ENCODE measurements at regions of chr5 and their contacts with region 1.

Region 1: DNA sequence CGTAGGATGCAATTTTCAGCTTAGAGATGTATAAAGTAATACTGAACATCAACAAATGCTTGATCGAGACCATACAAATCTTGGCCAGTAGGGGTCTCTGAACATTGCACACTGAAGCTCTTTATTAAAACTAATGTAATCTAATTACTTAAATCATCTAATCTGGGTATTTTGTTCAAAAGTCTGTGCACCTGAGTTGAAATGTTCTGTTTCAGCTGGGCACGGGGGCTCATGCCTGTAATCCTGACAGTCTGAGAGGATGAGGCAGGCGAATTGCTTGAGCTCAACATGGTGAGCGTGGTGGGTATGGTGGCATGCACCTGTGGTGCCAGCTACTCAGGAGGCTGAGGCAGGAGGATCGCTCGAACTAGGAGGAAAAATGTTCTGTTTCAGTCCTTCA is 41.0 kb downstream of the ESM1 start:
- DNase-seq: no peak
- H3K4me3 ChIP-seq: no peak overlapping the region
- H3K27me3 ChIP-seq: no peaks in the 10 kb centered on the region
- CTCF ChIP-seq: peak; percentile 80

Region 2: DNA sequence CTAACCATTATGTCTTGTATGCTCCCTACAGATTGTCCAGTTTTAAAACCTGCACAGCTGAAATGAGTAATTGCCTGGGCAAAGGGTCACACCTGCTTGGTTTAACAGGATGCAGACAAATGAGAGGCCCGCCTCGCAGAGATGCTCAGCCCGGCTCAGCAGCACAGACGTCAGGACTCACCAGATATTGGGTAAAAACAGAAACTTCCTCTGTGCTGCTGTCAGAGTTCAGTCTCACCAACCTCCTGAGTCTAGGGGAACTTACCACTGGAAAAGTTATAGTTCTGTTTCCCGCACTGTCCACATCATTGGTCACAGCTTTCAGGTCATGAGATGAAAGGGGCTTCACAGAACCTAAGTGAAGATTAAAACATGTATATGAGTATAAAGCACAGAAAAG is 111.5 kb before region 1 on chr5:
- CTCF ChIA-PET with region 1: no interaction called
- POLR2A ChIA-PET with region 1: no interaction called
- DNase-seq: no peak
- H3K4me3 ChIP-seq: no peak overlapping the region
- H3K27me3 ChIP-seq: no peaks in the 10 kb centered on the region
- CTCF ChIP-seq: no peak

Region 3: DNA sequence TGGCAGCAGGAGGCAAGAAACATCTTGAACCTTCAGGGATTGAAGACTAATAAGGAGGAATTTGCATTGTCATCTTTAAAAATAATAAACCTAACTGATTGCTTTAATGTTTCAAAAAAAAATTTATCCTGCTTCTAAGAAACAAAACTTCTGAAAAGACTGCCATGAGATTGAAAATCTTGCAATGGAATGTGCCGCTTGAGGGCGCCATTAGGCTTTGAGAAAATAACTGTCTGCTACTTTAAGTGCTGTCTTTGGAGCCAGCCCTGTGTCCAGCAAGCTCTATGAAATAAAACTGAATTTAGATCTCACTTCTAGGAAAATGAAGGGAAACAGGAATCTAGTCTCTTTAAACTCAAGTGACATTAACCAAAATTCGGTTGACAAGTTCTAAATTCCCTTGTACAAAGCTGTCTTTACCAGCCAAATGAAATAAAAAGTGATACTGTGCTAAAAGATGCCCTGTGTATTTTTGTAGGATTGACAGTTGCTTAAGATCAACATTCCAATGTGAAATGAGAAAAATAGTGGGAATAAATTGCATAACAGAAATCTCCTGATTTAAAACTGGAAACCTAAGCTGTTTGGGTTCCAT is 38.3 kb before region 1 on chr5:
- CTCF ChIA-PET with region 1: interaction called, 50 read pairs
- POLR2A ChIA-PET with region 1: no interaction called
- DNase-seq: peak; percentile 31
- H3K4me3 ChIP-seq: no peak overlapping the region
- H3K27me3 ChIP-seq: no peaks in the 10 kb centered on the region
- CTCF ChIP-seq: peak; percentile 77

Region 4: DNA sequence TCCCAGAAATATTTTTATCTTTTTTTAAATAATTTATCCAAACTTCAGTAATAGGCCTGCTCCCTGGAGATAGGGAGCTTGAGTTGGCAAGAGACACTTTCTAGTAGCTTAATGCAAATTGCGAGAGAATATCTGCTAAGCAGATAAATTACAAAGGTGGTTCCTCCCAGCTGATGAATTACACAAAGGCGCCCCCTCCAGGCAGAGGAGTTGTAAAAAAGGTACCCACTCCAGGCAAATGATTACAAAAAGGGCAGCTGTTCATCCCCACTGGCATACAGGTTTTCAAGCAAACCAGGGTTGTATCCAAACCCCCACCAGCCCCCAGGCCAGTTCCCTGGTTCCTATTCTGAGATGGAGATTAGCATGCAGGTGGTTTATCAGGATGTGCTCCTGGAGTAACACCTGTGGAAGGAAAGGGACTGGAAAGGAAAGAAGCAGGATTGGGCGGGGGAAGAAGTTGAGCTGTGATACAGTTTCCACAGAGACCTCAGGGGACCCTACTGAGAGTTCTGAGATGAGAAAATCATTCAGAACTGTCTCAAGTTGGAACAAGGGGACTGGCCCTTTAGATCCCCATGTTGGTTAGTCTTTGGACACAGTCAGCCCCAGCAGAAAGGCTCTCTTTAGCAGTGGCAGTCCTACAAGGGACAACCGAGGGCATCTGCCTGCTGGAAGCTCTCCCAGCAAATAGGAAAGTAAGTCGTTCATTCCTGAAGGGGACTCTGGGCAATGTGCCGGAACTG is 15.5 kb after region 1 on chr5:
- CTCF ChIA-PET with region 1: interaction called, 51 read pairs
- POLR2A ChIA-PET with region 1: no interaction called
- DNase-seq: no peak
- H3K4me3 ChIP-seq: no peak overlapping the region
- H3K27me3 ChIP-seq: no peaks in the 10 kb centered on the region
- CTCF ChIP-seq: peak; percentile 27; the same call in 1 of the 2 replicates

Region 5: GRCh38 chr5:54985301-54986268 is 41.2 kb after region 1 on chr5 and contains the start of gene ESM1:
- CTCF ChIA-PET with region 1: interaction called, 11 read pairs
- POLR2A ChIA-PET with region 1: no interaction called
- DNase-seq: peak; percentile 38
- H3K4me3 ChIP-seq: peak within 1 kb of the TSS; percentile 29
- H3K27me3 ChIP-seq: no peaks in the 10 kb centered on the region
- CTCF ChIP-seq: no peak
- polyA plus RNA-seq, gene ESM1: 2.4 and 2.8 TPM in 2 replicates

Region 6: GRCh38 chr5:55151923-55152842 is 207.8 kb after region 1 on chr5:
- CTCF ChIA-PET with region 1: interaction called, 45 read pairs
- POLR2A ChIA-PET with region 1: no interaction called
- DNase-seq: peak; percentile 52
- H3K4me3 ChIP-seq: no peak overlapping the region
- H3K27me3 ChIP-seq: no peaks in the 10 kb centered on the region
- CTCF ChIP-seq: no peak

Measured in BJ (cell line).